ENCODE measurements at regions of chr4 and their contacts with region 1.

Region 1: DNA sequence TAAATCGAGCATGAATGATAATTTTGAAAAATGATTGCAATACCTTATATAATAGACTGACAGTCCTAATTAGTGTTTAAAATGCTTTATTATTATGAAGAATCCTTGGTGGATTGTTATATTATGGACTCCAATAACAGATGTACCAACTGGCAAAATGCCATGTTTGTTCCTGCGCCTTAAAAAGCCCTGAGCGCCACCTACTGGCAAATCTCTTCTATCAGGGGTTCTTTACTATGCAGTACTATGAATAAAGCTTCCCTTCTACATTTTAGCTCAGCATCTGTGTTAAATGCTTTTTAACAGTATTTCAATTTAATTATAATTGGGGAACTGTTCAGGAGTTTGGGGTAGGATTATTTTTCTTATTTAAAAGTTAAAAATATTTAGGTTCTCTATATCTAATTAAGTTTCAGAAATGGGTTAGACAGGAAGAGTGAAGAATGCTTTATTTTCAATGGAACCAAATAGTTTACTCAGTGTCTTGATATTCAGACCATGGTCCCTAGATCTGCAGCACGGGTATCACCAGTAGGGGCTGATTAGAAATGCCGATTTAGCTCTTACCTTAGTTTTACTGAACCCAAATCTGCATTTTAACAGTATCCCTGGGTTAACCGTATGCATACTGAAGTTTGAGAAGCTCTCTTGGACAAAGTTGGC is 20.1 kb downstream of the CFAP97 start:
- DNase-seq: peak; percentile 39 to 93 (median 69)
- ATAC-seq: peak; percentile 54 to 78 (median 66)
- H3K4me3 ChIP-seq: no peak overlapping the region
- H3K4me3 Mint-ChIP-seq: no peak overlapping the region
- H3K27ac ChIP-seq: no peak overlapping the region
- H3K27ac Mint-ChIP-seq: no peak overlapping the region
- H3K4me1 ChIP-seq: peaks cover 0 to 5% of the 10 kb centered on the region in 2 experiments
- H3K4me1 Mint-ChIP-seq: peaks cover 38 to 48% (median 40%) of the 10 kb centered on the region in 3 donors
- H3K27me3 ChIP-seq: no peaks in the 10 kb centered on the region
- H3K27me3 Mint-ChIP-seq: no peaks in the 10 kb centered on the region

Region 2: GRCh38 chr4:185039508-185040273 is 144.1 kb before region 1 on chr4:
- CTCF ChIA-PET with region 1: interaction called, 4 to 23 read pairs
- POLR2A ChIA-PET with region 1: no interaction called
- DNase-seq: peak in 30 of 35 experiments; percentile 7 to 72 (median 28)
- ATAC-seq: peak; percentile 70 to 83 (median 74)
- H3K4me3 ChIP-seq: no peak overlapping the region
- H3K4me3 Mint-ChIP-seq: no peak overlapping the region
- H3K27ac ChIP-seq: no peak overlapping the region
- H3K27ac Mint-ChIP-seq: no peak overlapping the region
- H3K4me1 ChIP-seq: peaks cover 0 to 3% of the 10 kb centered on the region in 2 experiments
- H3K4me1 Mint-ChIP-seq: peaks cover 4 to 8% (median 4%) of the 10 kb centered on the region in 3 donors
- H3K27me3 ChIP-seq: peaks cover 0 to 5% of the 10 kb centered on the region in 2 experiments
- H3K27me3 Mint-ChIP-seq: peaks cover 10 to 40% of the 10 kb centered on the region in 2 donors

Region 3: DNA sequence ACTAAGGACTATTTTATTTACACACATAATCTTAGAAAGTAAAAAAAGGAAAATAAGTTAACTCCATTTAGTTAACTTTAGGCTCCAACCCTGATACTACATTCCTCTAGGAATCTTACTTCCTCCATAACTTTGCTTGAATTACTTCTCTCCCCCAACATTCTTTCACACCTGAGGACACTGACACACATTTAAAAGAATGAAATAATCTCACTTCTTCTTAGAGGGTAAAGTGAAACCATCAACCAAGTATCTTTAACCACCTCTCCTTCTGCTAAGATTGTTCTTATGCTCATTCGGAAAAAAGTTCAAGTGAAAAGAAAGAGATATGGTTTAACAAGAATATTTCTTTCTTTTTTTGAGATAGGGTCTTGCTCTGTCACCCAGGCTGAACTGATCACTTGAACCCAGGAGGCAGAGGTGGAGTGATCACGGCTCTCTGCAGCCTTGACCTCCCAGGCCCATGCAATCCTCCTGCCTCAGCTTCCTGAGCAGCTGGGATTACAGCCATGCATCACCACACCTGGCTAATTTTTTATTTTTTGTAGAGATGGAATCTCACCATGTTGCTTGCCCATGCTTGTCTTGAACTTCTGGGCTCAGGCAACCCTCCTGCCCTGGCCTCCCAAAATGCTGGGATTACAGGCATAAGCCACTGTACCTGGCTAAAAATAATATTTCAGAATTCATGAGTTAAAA is 12.2 kb before region 1 on chr4:
- CTCF ChIA-PET with region 1: interaction called, 6 to 13 read pairs
- POLR2A ChIA-PET with region 1: no interaction called
- DNase-seq: no peak
- ATAC-seq: no peak
- H3K4me3 ChIP-seq: no peak overlapping the region
- H3K4me3 Mint-ChIP-seq: no peak overlapping the region
- H3K27ac ChIP-seq: no peak overlapping the region
- H3K27ac Mint-ChIP-seq: no peak overlapping the region
- H3K4me1 ChIP-seq: peaks cover under 1 to 4% of the 10 kb centered on the region in 2 experiments
- H3K4me1 Mint-ChIP-seq: peaks cover 7 to 15% (median 11%) of the 10 kb centered on the region in 3 donors
- H3K27me3 ChIP-seq: peaks cover 0 to 2% of the 10 kb centered on the region in 2 experiments
- H3K27me3 Mint-ChIP-seq: peaks cover 0 to 4% of the 10 kb centered on the region in 2 donors

Region 4: DNA sequence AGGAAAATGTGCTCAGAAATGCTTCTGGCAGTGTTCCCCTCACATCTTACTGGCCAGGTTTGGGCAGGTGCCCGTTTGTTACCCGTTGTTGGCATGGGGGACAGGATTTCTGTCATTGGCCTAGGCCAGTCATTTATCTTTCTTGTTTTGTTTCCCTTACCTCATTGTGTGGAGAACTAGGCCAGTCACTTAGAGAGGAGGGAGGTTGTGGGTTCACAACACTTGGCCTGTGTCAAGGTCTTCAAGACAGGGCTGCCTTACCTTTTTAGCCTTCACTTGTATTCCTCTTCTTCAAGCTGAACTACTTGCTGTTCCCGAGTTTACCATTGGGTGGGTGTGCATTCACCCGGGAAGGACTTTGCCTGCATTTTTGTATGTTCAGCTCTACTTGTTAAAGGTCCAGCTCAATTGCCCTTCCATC is 43.4 kb after region 1 on chr4:
- CTCF ChIA-PET with region 1: no interaction called
- POLR2A ChIA-PET with region 1: no interaction called
- DNase-seq: no peak
- ATAC-seq: no peak
- H3K4me3 ChIP-seq: no peak overlapping the region
- H3K4me3 Mint-ChIP-seq: no peak overlapping the region
- H3K27ac ChIP-seq: no peak overlapping the region
- H3K27ac Mint-ChIP-seq: no peak overlapping the region
- H3K4me1 ChIP-seq: peaks cover 0 to 3% of the 10 kb centered on the region in 2 experiments
- H3K4me1 Mint-ChIP-seq: peaks cover 6 to 10% (median 7%) of the 10 kb centered on the region in 3 donors
- H3K27me3 ChIP-seq: no peaks in the 10 kb centered on the region
- H3K27me3 Mint-ChIP-seq: no peaks in the 10 kb centered on the region

Measured in T-cell (primary cell).